PC-9 (cell line): ENCODE measurements at regions of chr3 and their contacts with region 1.

Region 1: GRCh38 chr3:13673209-13673608 is 124.3 kb downstream of the FBLN2 start:
- DNase-seq: no peak
- H3K4me3 ChIP-seq: no peak overlapping the region
- H3K27ac ChIP-seq: no peak overlapping the region
- H3K4me1 ChIP-seq: no peaks in the 10 kb centered on the region
- H3K27me3 ChIP-seq: peaks cover 45% of the 10 kb centered on the region
- CTCF ChIP-seq: peak; percentile 70

Region 2: DNA sequence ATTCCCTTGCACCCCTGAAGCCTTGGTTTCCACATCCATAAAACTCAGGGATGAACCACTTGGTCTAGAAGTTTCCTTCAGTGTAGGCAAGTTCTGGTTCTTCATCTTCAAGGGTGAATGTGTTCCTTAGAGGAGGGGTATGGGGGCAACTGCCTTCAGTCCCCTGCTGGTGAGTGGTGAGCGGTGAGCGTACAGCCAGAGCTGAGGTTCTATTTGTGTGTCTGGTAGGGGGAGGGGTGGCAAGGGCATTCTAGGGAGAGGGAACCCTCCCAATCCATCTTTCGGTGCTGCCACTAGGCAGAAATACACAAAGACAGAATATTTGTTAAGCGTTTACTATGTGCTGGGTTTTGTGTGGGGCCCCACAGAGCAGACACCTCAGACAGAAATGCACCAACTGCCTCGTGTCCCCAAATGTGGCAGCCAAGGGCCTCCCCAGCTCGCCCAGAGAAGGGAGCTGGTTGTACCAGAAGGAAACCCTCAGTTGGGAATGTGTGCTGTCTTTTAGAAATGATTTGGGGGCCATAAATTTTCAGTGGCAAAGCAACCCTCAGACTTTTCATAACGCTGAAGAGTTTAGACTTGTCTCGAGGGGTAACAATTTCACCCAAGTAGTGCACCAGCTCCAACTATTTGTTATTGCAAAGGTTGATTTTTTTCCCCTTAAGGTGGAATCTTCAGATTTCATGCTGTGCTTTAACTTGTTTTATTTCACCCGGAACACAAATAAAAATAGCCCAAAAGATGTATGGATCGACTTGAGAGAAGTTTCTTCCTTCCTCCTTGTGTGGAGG is 13.4 kb after region 1 on chr3:
- CTCF ChIA-PET with region 1: interaction called, 11 read pairs
- POLR2A ChIA-PET with region 1: no interaction called
- intact Hi-C with region 1: no loop called
- DNase-seq: no peak
- H3K4me3 ChIP-seq: no peak overlapping the region
- H3K27ac ChIP-seq: no peak overlapping the region
- H3K4me1 ChIP-seq: no peaks in the 10 kb centered on the region
- H3K27me3 ChIP-seq: peaks cover 66% of the 10 kb centered on the region
- CTCF ChIP-seq: no peak